ENCODE measurements at regions of chr7 and their contacts with region 1.

Region 1: GRCh38 chr7:77565917-77566316 is 28.8 kb downstream of the PTPN12 start:
- DNase-seq: peak in 2 of 14 experiments; percentile 10 to 22
- ATAC-seq: no peak
- H3K4me3 ChIP-seq: no peak overlapping the region
- H3K4me3 Mint-ChIP-seq: no peak overlapping the region
- H3K27ac ChIP-seq: no peak overlapping the region
- H3K27ac Mint-ChIP-seq: no peak overlapping the region
- H3K4me1 ChIP-seq: no peaks in the 10 kb centered on the region
- H3K4me1 Mint-ChIP-seq: peaks cover 9% of the 10 kb centered on the region
- H3K27me3 ChIP-seq: no peaks in the 10 kb centered on the region
- H3K27me3 Mint-ChIP-seq: no peaks in the 10 kb centered on the region
- CTCF ChIP-seq: no peak

Region 2: GRCh38 chr7:77619314-77619713 is 53.4 kb after region 1 on chr7:
- CTCF ChIA-PET with region 1: no interaction called
- POLR2A ChIA-PET with region 1: no interaction called
- intact Hi-C with region 1: loop called in 1 of 2 experiments (anchors 2 kb)
- DNase-seq: no peak
- ATAC-seq: no peak
- H3K4me3 ChIP-seq: no peak overlapping the region
- H3K4me3 Mint-ChIP-seq: no peak overlapping the region
- H3K27ac ChIP-seq: no peak overlapping the region
- H3K27ac Mint-ChIP-seq: no peak overlapping the region
- H3K4me1 ChIP-seq: no peaks in the 10 kb centered on the region
- H3K4me1 Mint-ChIP-seq: no peaks in the 10 kb centered on the region
- H3K27me3 ChIP-seq: no peaks in the 10 kb centered on the region
- H3K27me3 Mint-ChIP-seq: no peaks in the 10 kb centered on the region
- CTCF ChIP-seq: no peak